Activated naive CD4-positive, alpha-beta T cell treated with anti-CD3 and anti-CD28 coated beads for 36 hours (primary cell): ENCODE measurements at regions of chr1 and their contacts with region 1.

Region 1: DNA sequence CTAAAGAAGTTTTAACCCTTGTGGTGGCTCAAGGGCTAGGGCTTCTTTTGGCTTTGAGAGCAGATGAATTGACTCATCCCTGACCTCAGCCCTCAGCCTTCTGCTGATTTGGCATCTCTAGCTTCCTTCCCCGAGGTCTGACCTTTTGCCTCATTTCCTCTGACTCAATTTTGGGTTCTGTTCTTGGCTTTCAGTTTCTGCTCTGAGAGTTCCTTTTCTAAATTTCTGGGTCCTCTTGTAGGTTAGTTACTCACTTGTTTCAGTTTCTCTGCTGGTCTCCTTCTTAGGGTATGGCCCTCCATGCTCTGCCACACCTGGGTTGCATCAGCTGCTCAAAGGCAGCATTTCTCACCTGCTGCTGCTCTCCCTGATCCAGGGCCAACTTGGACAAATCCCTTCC is 19.4 kb downstream of the PDE4B start:
- DNase-seq: peak; percentile 78
- H3K4me3 Mint-ChIP-seq: no peak overlapping the region
- H3K27ac Mint-ChIP-seq: peak overlapping the region; percentile 36
- H3K4me1 Mint-ChIP-seq: peaks cover 12% of the 10 kb centered on the region
- H3K27me3 Mint-ChIP-seq: peaks cover 31% of the 10 kb centered on the region

Region 2: DNA sequence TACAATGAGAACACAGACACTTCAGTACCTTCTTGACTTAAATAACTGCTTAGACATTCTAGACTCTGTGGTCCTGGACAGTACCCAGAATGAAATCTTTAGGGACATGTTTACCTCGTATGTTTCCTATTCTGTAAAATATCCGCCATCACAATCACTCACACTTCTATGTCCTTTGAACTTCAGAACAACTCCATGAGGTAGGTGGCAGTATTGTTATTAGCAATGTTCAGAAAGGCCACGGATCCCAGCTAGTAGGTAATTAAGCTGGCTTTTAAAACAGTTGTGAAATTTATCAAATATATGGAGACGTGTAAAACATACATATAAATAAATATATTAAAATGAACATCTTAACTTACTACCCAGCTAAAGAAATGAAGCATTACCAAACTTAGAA is 1258.8 kb before region 1 on chr1:
- CTCF ChIA-PET with region 1: no interaction called
- intact Hi-C with region 1: loop called (anchors 5 kb)
- DNase-seq: no peak
- H3K4me3 Mint-ChIP-seq: no peak overlapping the region
- H3K27ac Mint-ChIP-seq: no peak overlapping the region
- H3K4me1 Mint-ChIP-seq: peaks cover 41% of the 10 kb centered on the region
- H3K27me3 Mint-ChIP-seq: no peaks in the 10 kb centered on the region

Region 3: GRCh38 chr1:65209005-65209885 is 602.8 kb before region 1 on chr1:
- CTCF ChIA-PET with region 1: no interaction called
- intact Hi-C with region 1: loop called (anchors 1 kb)
- DNase-seq: peak; percentile 28
- H3K4me3 Mint-ChIP-seq: no peak overlapping the region
- H3K27ac Mint-ChIP-seq: no peak overlapping the region
- H3K4me1 Mint-ChIP-seq: peaks cover 23% of the 10 kb centered on the region
- H3K27me3 Mint-ChIP-seq: peaks cover 3% of the 10 kb centered on the region

Region 4: GRCh38 chr1:65393347-65393746 is 418.7 kb before region 1 on chr1:
- CTCF ChIA-PET with region 1: no interaction called
- intact Hi-C with region 1: loop called (anchors 10 kb)
- DNase-seq: peak; percentile 39
- H3K4me3 Mint-ChIP-seq: no peak overlapping the region
- H3K27ac Mint-ChIP-seq: no peak overlapping the region
- H3K4me1 Mint-ChIP-seq: peaks cover 22% of the 10 kb centered on the region
- H3K27me3 Mint-ChIP-seq: no peaks in the 10 kb centered on the region

Region 5: DNA sequence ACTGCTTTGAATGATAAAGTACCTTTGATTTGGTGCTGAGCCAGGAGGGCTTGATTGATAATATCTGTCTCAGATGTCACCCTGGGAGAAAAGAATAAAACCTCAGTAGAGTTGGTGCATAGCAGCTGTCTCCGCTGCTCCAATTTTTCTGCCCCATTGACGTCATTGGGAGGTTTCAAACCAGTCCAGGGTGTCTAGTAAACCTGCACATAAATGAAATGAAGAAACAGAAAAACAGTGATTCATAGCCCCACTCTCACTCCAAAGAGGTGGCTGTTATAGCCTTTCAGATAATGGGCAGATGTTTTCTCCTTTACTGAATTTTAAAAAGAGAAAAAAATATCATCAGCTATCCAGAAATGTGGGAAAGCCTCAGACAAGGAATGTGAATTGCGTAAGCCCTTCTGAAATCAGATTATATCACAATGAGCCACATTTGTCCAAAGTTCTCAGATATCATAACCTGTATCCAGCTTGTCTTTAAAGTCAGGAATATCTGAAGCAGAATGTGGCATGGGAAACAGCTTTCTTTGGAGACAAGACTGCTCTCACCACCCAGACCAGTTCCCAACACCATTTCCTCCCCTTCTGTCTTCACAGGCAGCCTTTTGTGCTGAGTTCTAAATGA is 370.6 kb after region 1 on chr1:
- CTCF ChIA-PET with region 1: no interaction called
- intact Hi-C with region 1: loop called (anchors 1 kb)
- DNase-seq: peak; percentile 79
- H3K4me3 Mint-ChIP-seq: no peak overlapping the region
- H3K27ac Mint-ChIP-seq: peak overlapping the region; percentile 13
- H3K4me1 Mint-ChIP-seq: peaks cover 33% of the 10 kb centered on the region
- H3K27me3 Mint-ChIP-seq: no peaks in the 10 kb centered on the region

Region 6: GRCh38 chr1:66300972-66301451 is 488.9 kb after region 1 on chr1:
- CTCF ChIA-PET with region 1: no interaction called
- intact Hi-C with region 1: loop called (anchors 1 kb)
- DNase-seq: peak; percentile 54
- H3K4me3 Mint-ChIP-seq: peak overlapping the region; percentile 40
- H3K27ac Mint-ChIP-seq: peak overlapping the region; percentile 69
- H3K4me1 Mint-ChIP-seq: peaks cover 38% of the 10 kb centered on the region
- H3K27me3 Mint-ChIP-seq: no peaks in the 10 kb centered on the region

Region 7: DNA sequence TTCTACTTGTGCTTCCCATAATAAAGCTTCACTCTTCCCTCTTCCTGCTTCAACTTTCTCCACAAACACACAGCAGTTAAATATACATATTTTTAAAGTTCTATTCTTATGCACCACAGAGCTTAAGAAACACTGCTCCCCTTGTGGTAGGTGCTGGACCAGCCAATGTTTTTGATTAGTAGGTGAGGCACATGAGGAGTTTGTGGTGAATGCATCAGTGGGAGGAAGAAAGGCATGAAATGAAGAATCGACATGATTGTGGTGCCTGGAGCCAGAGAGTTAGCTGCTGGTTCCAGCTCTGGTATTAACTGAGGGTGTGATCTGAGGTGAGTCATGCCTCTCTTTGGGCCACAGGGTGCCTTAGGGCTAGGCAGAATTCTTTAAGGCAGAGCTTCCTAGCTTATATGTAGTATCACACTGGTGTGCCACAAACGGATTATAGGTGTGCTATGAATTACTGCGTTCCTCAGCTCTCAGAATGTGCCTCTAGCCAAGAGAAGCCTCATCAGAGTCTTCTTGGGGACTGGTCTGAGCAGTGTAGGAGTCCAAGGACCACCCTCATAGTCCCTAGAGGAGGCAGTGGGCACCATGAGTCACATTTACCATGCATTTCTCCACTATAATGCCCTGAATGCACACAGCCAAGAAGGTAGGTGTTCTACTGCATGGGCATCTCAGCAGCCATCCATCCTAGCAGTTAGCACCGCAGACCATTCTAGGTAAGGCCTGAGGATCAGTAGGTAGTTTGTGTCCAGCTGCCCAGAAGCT is 624.5 kb after region 1 on chr1:
- CTCF ChIA-PET with region 1: no interaction called
- intact Hi-C with region 1: loop called (anchors 1 kb)
- DNase-seq: peak; percentile 81
- H3K4me3 Mint-ChIP-seq: no peak overlapping the region
- H3K27ac Mint-ChIP-seq: no peak overlapping the region
- H3K4me1 Mint-ChIP-seq: peaks cover 40% of the 10 kb centered on the region
- H3K27me3 Mint-ChIP-seq: peaks cover 2% of the 10 kb centered on the region